H1 (cell line): ENCODE measurements at regions of chr7 and their contacts with region 1.

Region 1: DNA sequence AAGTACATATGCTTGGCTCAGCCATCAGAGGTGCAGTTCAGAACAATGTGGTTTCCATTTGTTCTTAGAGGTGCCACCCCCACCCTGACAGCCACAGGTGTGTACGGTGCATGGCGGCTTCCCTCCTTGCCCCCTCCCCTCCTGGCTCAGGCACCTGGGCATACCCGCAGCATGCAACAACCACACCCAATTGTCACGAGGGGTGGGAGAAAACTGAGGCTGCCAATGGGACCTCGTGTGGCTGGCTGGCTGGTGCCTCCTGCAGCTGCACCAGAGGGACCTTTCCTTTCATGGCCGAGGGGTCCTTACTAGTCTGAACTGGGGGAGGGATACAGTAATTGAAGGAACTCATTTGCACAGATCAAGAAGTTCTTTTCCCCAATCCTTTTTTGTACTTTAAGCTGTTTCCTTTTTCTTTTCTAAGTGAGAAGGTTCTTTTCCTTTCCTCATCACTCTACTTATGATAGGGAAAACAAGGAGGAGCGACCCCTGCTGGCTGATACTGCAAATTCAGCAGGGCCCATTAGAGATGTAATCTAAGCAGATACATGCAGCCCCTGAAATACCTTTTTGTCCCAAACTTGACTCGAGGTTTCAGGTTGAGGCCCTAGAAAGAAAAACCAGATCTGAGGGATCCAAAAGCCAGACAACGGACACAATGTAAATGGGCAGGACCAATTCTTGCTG is 305.3 kb downstream of the DNAJB9 start:
- DNase-seq: peak; percentile 13 to 79
- H3K4me3 ChIP-seq: no peak overlapping the region
- H3K27ac ChIP-seq: no peak overlapping the region
- H3K4me1 ChIP-seq: no peaks in the 10 kb centered on the region
- H3K27me3 ChIP-seq: no peaks in the 10 kb centered on the region
- CTCF ChIP-seq: peak in 2 of 3 experiments; percentile 28 to 48; a peak in 2 of 4 replicates
- EP300 ChIP-seq: no peak
- POLR2A ChIP-seq: no peak
- RAD21 ChIP-seq: peak; percentile 34 to 35; a peak in 2 of 4 replicates

Region 2: GRCh38 chr7:108818742-108819141 is 56.3 kb before region 1 on chr7:
- CTCF ChIA-PET with region 1: no interaction called
- POLR2A ChIA-PET with region 1: no interaction called
- DNase-seq: no peak
- H3K4me3 ChIP-seq: no peak overlapping the region
- H3K27ac ChIP-seq: no peak overlapping the region
- H3K4me1 ChIP-seq: no peaks in the 10 kb centered on the region
- H3K27me3 ChIP-seq: no peaks in the 10 kb centered on the region
- CTCF ChIP-seq: no peak
- EP300 ChIP-seq: no peak
- POLR2A ChIP-seq: no peak
- RAD21 ChIP-seq: no peak

Region 3: GRCh38 chr7:108863227-108863848 is 11.7 kb before region 1 on chr7:
- CTCF ChIA-PET with region 1: interaction called, 10 read pairs
- POLR2A ChIA-PET with region 1: no interaction called
- DNase-seq: no peak
- H3K4me3 ChIP-seq: no peak overlapping the region
- H3K27ac ChIP-seq: no peak overlapping the region
- H3K4me1 ChIP-seq: peaks cover 0 to 5% (median 0%) of the 10 kb centered on the region in 4 experiments; a peak in 1 of 7 replicates
- H3K27me3 ChIP-seq: no peaks in the 10 kb centered on the region; a peak in 1 of 7 replicates
- CTCF ChIP-seq: peak in 1 of 3 experiments; percentile 0; a peak in 1 of 4 replicates
- EP300 ChIP-seq: no peak
- POLR2A ChIP-seq: no peak
- RAD21 ChIP-seq: peak; percentile 21 to 25; a peak in 2 of 4 replicates

Region 4: DNA sequence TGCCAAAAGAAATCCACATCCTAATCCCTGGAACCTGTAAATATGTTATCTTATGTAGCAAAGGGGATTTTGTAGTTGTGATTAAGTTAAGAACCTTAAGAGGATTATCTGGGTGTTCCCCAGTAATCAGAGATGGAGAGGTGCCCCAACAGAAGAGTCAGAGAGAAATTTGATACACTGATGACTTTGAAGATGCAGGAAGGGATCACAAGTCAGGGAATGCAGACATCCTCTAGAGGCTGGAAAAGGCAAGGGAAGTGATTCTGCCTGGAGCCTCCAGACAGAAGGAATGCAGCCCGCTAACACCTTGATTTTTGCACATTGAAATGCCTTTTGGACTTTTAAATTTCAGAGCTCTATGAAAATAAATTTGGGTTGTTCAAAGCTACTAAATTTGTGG is 226.3 kb after region 1 on chr7:
- CTCF ChIA-PET with region 1: no interaction called
- POLR2A ChIA-PET with region 1: no interaction called
- DNase-seq: no peak
- H3K4me3 ChIP-seq: no peak overlapping the region
- H3K27ac ChIP-seq: no peak overlapping the region
- H3K4me1 ChIP-seq: no peaks in the 10 kb centered on the region
- H3K27me3 ChIP-seq: no peaks in the 10 kb centered on the region
- CTCF ChIP-seq: no peak
- EP300 ChIP-seq: no peak
- POLR2A ChIP-seq: no peak
- RAD21 ChIP-seq: no peak